PC-9 (cell line): ENCODE measurements at regions of chr7 and their contacts with region 1.

Region 1: DNA sequence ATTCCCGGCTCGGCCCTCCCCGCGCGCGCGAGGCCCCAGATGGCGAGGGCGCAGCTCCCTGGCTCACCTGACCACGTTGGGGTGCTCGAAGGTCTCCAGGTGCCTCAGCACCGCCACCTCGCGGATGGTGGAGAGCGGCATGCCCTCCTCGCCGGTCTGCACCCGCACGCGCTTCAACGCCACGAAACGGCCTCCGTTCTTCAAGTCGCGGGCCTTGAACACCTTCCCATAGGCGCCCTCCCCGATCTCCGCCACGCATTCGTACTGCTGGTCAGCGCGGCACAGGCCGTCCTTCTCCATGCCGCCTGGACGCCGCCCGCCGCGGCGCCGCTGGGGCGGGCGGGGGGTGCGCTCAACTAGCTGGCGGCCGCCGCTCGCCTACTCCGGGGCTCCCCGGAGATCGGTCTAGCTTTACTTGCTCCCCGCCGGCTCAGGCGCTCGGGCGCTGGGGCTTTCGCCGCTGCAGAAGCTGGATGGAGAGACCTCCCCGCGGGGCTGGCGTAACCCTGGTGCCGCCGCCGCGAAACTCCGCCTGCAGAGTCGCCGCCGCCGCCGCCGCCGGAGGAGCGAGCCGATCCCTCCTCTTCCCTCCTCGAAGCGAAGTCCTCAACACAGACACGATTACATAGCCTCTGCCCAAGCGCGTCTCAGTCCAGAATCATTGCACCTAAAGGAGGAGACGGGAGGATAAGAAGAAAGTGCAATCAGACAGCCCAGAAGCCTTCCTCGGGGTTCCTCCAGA is 3.2 kb downstream of the CDK6 start:
- DNase-seq: peak; percentile 70 to 91
- H3K4me3 ChIP-seq: peak overlapping the region; percentile 94
- H3K27ac ChIP-seq: peak overlapping the region; percentile 77
- H3K4me1 ChIP-seq: peaks cover 44% of the 10 kb centered on the region
- H3K27me3 ChIP-seq: no peaks in the 10 kb centered on the region
- CTCF ChIP-seq: peak; percentile 77

Region 2: DNA sequence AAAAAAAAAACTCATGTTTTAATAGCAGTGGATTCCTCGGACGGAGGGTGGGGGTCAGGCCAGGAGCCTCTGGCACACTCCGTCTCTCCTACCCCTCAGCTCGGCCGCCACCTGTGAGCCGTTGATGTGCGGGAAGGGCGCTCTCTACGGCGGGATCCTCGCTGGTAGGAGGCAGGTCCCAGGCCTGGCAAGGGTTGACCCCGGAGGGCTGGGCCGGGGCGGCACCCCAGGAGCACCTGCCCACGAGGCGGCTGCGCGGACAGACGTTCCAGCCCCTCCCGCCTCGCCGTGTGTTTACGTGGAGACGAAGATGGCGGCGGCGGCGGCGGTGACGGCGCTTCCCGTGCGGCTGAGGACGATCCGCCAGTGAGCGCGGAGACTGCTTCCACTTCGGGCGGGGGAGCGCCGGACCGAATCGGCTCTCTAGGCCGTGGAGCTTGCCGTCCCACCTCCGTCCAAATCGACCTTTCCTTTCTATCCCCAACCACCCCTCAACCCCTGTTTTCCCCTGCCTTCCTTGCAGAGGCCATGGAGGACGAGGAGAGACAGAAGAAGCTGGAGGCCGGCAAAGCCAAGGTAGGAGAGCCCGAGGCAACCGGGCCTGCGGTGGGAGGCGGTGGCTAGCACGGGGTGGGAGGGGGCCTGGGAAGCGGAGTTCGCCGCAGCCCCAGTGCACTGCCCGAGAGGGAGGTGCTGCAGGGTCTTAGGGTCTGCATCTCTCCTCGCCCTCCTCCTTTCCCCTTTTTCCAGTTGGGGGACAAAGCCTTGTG is 892.4 kb before region 1 on chr7 and contains the start of gene AKAP9:
- CTCF ChIA-PET with region 1: interaction called, 15 read pairs
- POLR2A ChIA-PET with region 1: interaction called, 9 read pairs
- intact Hi-C with region 1: no loop called
- DNase-seq: peak; percentile 81 to 94
- H3K4me3 ChIP-seq: peak within 1 kb of the TSS; percentile 70
- H3K27ac ChIP-seq: peak within 1 kb of the TSS; percentile 78
- H3K4me1 ChIP-seq: peaks cover 30% of the 10 kb centered on the region
- H3K27me3 ChIP-seq: no peaks in the 10 kb centered on the region
- CTCF ChIP-seq: no peak
- total RNA-seq, gene AKAP9: 48.0 and 71.3 TPM in 2 replicates

Region 3: DNA sequence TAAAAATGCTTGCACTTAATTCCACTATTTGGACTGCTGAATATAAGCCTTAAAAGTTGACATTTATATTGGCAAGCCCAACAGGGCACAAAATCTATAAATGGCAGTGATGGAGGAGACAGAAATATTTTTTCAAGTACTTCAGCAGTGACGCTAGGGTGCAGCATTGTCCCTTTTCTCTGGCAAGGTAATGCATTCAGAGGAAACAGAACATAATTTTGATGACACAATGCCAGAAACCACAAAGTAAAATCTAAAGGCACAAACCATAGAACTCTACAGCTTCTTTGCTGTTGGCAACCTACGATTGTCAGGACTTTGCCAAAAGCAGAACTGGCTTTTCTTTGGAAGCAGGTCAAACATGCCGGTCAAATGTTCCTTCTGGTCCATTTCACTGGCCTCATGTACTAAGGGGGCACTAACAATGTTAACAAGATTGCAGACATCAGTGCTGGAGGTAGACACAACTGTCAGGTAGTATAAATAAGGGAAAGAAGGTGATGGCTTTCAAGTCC is 212.1 kb before region 1 on chr7:
- CTCF ChIA-PET with region 1: interaction called, 7 read pairs
- POLR2A ChIA-PET with region 1: interaction called, 6 read pairs
- intact Hi-C with region 1: loop called (anchors 1 kb)
- DNase-seq: peak; percentile 70 to 75
- H3K4me3 ChIP-seq: no peak overlapping the region
- H3K27ac ChIP-seq: peak overlapping the region; percentile 34; the same call in 1 of the 2 replicates
- H3K4me1 ChIP-seq: peaks cover 23% of the 10 kb centered on the region
- H3K27me3 ChIP-seq: no peaks in the 10 kb centered on the region
- CTCF ChIP-seq: peak; percentile 84

Region 4: GRCh38 chr7:92698237-92698841 is 134.9 kb before region 1 on chr7:
- CTCF ChIA-PET with region 1: interaction called, 13 read pairs
- POLR2A ChIA-PET with region 1: interaction called, 10 read pairs
- intact Hi-C with region 1: loop called (anchors 1 kb)
- DNase-seq: no peak
- H3K4me3 ChIP-seq: no peak overlapping the region
- H3K27ac ChIP-seq: no peak overlapping the region
- H3K4me1 ChIP-seq: peaks cover 6% of the 10 kb centered on the region; the same call in 1 of the 2 replicates
- H3K27me3 ChIP-seq: no peaks in the 10 kb centered on the region
- CTCF ChIP-seq: no peak

Region 5: GRCh38 chr7:92904292-92905131 is 71.3 kb after region 1 on chr7:
- CTCF ChIA-PET with region 1: interaction called, 5 read pairs
- POLR2A ChIA-PET with region 1: interaction called, 6 read pairs
- intact Hi-C with region 1: loop called (anchors 1 kb)
- DNase-seq: peak; percentile 88 to 93
- H3K4me3 ChIP-seq: no peak overlapping the region
- H3K27ac ChIP-seq: peak overlapping the region; percentile 89
- H3K4me1 ChIP-seq: peaks cover 21% of the 10 kb centered on the region
- H3K27me3 ChIP-seq: no peaks in the 10 kb centered on the region
- CTCF ChIP-seq: no peak

Region 6: DNA sequence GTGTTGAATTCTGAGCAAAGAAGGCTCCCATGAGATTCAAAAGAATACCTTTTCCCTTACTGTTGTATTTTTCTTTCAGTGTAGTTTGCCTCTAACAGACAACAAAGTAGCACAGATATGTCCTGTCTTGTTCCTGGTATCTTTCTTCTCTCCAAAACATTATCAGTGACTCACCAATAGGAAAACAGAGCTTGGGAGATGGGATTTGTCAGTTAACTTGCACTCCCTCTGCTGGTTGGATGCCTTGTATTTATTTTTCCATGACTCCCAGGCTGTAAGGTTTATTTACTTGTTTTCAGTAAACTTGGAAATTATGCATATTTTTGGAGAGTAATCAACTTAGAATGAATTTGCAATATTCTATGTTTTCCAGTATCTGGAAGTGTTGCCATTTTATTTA is 154.9 kb after region 1 on chr7:
- CTCF ChIA-PET with region 1: interaction called, 12 read pairs
- POLR2A ChIA-PET with region 1: no interaction called
- intact Hi-C with region 1: loop called (anchors 1 kb)
- DNase-seq: peak; percentile 5 to 57
- H3K4me3 ChIP-seq: no peak overlapping the region
- H3K27ac ChIP-seq: no peak overlapping the region
- H3K4me1 ChIP-seq: no peaks in the 10 kb centered on the region
- H3K27me3 ChIP-seq: no peaks in the 10 kb centered on the region
- CTCF ChIP-seq: peak; percentile 69

Region 7: DNA sequence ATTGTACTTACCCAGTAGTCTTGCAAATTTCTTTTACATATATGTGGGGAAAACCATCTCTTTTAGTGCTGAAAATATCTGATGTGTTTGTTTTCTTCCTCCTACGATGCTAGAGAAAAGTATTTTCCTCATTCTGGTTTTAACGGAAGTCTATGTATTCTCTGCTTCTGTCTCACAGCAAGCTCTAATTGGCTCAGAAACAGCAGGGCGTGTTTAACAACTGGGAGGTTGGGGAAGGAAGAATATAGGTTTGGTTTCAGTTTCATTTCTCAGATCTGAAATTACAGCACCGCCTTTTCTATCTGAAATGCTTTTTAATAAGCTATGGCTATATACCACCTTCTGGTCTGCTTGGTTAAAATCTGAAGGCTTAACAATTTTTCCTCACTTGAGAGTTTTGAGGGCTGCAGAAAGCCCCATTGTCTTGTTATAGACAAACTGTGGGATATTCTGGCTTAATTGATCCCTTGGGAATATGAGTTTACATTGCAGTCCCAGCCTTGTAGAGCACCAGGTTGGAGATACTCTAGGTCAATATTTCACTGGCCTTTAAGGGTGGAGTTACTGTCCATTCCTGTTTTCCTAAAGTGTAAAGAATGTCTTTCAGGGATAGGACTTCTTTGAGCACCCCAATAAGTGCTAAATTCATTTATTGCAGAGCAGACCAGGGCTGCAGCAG is 284.8 kb after region 1 on chr7 and contains the start of gene SAMD9:
- CTCF ChIA-PET with region 1: no interaction called
- POLR2A ChIA-PET with region 1: interaction called, 9 read pairs
- intact Hi-C with region 1: loop called (anchors 1 kb)
- DNase-seq: peak; percentile 44 to 79
- H3K4me3 ChIP-seq: peak within 1 kb of the TSS; percentile 48; the same call in 1 of the 2 replicates
- H3K27ac ChIP-seq: peak within 1 kb of the TSS; percentile 95
- H3K4me1 ChIP-seq: peaks cover 57% of the 10 kb centered on the region
- H3K27me3 ChIP-seq: no peaks in the 10 kb centered on the region
- CTCF ChIP-seq: no peak
- total RNA-seq, gene SAMD9: 7.0 and 12.1 TPM in 2 replicates